ENCODE measurements at regions of chr9 and their contacts with region 1.

Region 1: DNA sequence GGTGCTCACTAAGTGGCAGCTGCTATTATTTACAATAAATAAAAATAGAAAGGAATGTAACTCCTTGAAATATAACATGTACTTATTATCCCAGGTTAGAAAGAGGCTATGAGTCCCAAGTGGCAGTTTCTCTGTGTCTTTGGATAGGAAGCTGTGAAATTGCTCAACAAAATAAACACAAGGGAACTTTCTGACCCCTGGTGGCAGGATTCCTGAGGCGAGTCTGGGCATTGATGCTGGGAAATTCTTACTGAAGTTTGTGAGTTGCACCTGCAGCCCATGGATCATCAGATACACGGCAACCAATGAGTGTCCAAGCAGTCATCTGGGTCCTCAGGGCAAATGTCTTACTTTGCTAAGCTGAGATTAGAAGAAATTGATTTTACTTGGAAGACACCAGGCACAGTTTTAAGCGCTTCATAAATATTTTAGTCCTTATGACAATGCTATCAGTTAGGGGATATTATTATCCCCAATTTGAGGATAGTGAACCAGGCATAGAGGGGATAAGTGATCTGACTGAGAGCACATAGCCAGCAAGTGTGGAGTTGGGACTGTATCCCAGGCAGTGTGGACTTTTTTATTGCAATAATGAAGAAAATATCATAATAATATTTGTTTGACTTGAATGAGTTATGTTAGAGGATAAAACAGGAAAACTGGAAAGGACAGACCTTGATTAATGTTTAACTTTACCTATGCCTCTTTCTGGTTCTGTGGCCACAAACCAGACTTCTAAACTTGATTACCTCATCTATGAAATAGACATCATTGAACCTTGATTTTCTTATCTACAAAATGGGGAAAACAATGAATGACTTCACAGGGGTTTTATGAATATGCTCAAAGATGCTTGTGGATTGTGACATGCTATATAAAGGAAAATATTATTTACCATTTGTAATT is 265.5 kb upstream of the ADAMTSL1 start:
- DNase-seq: peak; percentile 58
- H3K4me3 Mint-ChIP-seq: no peak overlapping the region
- H3K27ac Mint-ChIP-seq: no peak overlapping the region
- H3K4me1 Mint-ChIP-seq: peaks cover 15% of the 10 kb centered on the region
- H3K27me3 Mint-ChIP-seq: no peaks in the 10 kb centered on the region
- CTCF ChIP-seq: peak; percentile 35

Region 2: GRCh38 chr9:17531642-17532254 is 676.7 kb before region 1 on chr9:
- CTCF ChIA-PET with region 1: no interaction called
- intact Hi-C with region 1: loop called (anchors 1 kb)
- DNase-seq: peak; percentile 58
- H3K4me3 Mint-ChIP-seq: peak overlapping the region; percentile 26
- H3K27ac Mint-ChIP-seq: no peak overlapping the region
- H3K4me1 Mint-ChIP-seq: no peaks in the 10 kb centered on the region
- H3K27me3 Mint-ChIP-seq: peaks cover 41% of the 10 kb centered on the region
- CTCF ChIP-seq: peak; percentile 52

Region 3: DNA sequence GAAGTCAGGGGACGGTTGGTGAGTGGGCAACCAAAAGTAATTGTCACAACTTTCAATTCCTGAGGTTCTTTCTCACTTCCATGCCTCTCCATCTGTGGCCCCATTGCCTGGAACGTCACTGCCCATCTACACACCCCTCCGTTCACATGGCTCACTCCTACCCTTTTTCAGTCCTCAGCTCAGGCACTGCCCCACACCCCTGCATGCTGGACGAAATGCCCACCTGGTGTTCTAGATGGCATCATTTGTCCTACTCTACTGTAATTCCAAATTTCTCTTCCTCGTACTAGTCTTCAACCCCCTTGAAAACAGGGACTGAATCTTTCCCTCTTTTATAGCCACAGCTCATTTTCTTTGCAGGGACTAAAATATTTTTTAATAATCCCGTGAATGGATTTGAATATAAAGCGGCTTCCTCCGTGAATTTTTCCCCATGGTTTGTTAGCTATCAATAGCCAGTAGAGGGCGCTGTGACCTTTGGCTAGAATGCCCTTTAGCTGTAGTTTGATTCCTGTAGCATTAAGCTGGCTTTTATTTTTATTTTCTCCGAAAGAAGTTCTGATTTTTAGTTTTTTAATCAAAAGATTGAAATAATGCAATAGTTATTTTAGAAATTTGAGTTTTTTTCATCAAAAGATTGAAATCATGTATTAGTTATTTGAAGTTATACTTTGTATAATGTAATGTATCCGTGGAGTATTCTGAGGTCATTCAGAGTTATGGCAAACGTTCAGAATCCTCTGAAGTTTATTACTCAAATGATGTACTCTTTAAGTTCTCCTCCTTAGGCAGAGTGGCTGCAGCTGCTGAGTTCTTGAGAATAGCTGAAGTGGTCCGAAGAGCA is 397.5 kb before region 1 on chr9:
- CTCF ChIA-PET with region 1: interaction called, 15 read pairs
- intact Hi-C with region 1: loop called (anchors 1 kb)
- DNase-seq: peak; percentile 55
- H3K4me3 Mint-ChIP-seq: no peak overlapping the region
- H3K27ac Mint-ChIP-seq: no peak overlapping the region
- H3K4me1 Mint-ChIP-seq: peaks cover 19% of the 10 kb centered on the region
- H3K27me3 Mint-ChIP-seq: no peaks in the 10 kb centered on the region
- CTCF ChIP-seq: peak; percentile 57

Region 4: DNA sequence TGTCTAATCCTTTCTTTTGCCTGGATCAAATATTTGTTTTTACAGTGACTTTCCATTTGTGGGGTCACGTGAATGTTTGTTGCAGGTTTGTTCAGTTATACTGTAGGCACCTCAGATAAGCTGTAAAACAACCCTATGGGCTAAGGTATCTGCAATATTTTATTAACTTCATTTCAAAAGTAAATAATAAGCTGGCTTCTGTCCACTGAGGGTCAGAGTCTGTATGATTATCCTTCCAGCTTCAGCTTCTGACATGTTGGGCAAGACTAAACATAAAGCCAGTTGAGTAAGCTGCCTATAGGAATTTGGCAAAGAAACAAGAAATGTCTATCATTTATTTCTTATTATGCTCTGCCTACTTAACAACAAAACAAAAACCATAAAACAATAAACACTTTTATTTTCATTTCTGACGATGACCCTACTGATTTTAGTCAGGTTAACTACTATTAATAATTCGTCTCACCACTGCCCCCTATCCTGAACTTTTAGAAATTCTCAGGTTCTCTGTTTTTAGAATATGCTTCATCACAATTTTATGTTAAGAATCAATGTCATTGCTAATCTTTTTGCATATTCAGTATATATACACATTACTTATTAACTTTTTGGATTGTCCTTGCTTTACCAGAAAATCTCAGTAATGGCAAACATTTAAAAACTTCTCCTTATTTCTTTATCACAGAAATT is 148.0 kb before region 1 on chr9:
- CTCF ChIA-PET with region 1: no interaction called
- intact Hi-C with region 1: loop called (anchors 10 kb)
- DNase-seq: no peak
- H3K4me3 Mint-ChIP-seq: no peak overlapping the region
- H3K27ac Mint-ChIP-seq: no peak overlapping the region
- H3K4me1 Mint-ChIP-seq: peaks cover 10% of the 10 kb centered on the region
- H3K27me3 Mint-ChIP-seq: no peaks in the 10 kb centered on the region
- CTCF ChIP-seq: peak; percentile 18

Region 5: DNA sequence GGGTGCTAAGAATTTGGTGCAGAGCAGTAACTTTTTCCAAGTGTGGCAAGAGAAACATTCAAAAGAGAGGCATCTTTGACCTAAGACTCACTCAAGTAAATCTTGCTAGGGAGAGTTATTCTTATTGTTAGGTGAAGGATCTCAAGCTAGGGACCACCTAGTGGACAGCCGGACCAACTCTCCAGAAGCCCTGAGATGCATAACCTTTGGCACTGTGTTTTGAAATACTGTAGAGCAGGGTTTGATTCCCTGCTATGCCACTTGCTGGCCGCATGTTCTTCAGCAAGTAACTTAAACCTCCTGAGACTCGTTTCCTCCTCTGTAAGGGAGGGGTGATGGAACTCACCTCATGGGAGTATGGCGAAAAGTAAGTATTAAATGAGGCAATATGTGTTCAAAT is 70.6 kb before region 1 on chr9:
- CTCF ChIA-PET with region 1: no interaction called
- intact Hi-C with region 1: no loop called
- DNase-seq: no peak
- H3K4me3 Mint-ChIP-seq: no peak overlapping the region
- H3K27ac Mint-ChIP-seq: no peak overlapping the region
- H3K4me1 Mint-ChIP-seq: no peaks in the 10 kb centered on the region
- H3K27me3 Mint-ChIP-seq: no peaks in the 10 kb centered on the region
- CTCF ChIP-seq: no peak

Region 6: GRCh38 chr9:18149471-18150011 is 58.9 kb before region 1 on chr9:
- CTCF ChIA-PET with region 1: no interaction called
- intact Hi-C with region 1: loop called (anchors 1 kb)
- DNase-seq: no peak
- H3K4me3 Mint-ChIP-seq: no peak overlapping the region
- H3K27ac Mint-ChIP-seq: no peak overlapping the region
- H3K4me1 Mint-ChIP-seq: no peaks in the 10 kb centered on the region
- H3K27me3 Mint-ChIP-seq: no peaks in the 10 kb centered on the region
- CTCF ChIP-seq: no peak

Region 7: GRCh38 chr9:18638371-18639249 is 430.2 kb after region 1 on chr9:
- CTCF ChIA-PET with region 1: no interaction called
- intact Hi-C with region 1: no loop called
- DNase-seq: no peak
- H3K4me3 Mint-ChIP-seq: no peak overlapping the region
- H3K27ac Mint-ChIP-seq: no peak overlapping the region
- H3K4me1 Mint-ChIP-seq: no peaks in the 10 kb centered on the region
- H3K27me3 Mint-ChIP-seq: peaks cover 17% of the 10 kb centered on the region
- CTCF ChIP-seq: no peak